GM18951 (cell line): ENCODE measurements at regions of chr12 and their contacts with region 1.

Region 1: GRCh38 chr12:8108808-8109398 is 14.5 kb upstream of the CLEC4A start:
- POLR2A ChIP-seq: no peak

Region 2: GRCh38 chr12:8226355-8226754 is 117.5 kb after region 1 on chr12:
- in situ Hi-C with region 1: loop called (anchors 25 kb)
- POLR2A ChIP-seq: no peak